ENCODE measurements at regions of chr16 and their contacts with region 1.

Region 1: GRCh38 chr16:75305364-75306098 is 54.1 kb upstream of the BCAR1 start:
- DNase-seq: peak; percentile 97
- H3K4me3 ChIP-seq: no peak overlapping the region
- H3K27ac ChIP-seq: peak overlapping the region; percentile 90
- H3K4me1 ChIP-seq: peaks cover 38% of the 10 kb centered on the region
- H3K27me3 ChIP-seq: no peaks in the 10 kb centered on the region
- CTCF ChIP-seq: no peak
- POLR2A ChIP-seq: peak in 1 of 2 donors; percentile 6

Region 2: DNA sequence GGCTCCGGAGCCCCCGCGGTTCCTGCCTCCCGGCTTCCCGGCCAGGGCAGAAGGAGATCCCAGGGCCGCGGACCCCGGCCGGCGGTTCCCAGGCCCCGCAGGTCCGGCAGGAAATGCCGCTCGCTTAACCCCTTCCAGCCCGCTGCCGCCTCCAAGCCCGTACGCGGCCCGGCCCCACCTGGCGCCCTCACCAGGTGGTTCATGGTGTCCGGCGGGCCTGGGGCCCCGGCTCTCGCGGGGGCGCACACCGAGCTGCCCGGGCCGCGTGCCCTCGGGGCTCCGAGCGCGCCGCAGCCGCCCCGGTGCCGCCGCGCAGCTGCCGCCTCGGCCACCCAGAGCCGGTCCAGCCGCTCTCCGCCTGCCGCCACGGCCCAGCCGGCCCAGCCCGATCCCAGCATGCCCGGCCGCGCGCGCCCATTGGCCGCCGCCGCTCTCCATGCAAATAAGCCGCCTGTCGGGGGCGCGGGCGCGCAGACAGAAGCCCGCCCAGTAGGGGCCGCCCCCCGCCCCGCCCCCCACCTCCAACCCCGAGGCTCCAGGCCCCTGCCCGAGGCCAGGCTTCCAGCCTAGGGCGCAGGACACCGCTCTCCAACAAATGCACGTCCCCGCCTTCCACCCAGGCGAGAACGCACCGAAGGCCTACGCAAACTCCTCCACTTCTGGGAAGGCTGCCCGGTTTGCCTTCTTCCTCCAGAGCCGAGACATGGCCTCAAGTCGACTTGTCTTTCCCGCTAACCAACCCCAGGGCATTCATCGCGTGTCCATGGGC is 54.1 kb before region 1 on chr16 and contains the start of gene BCAR1:
- intact Hi-C with region 1: loop called (anchors 5 kb)
- DNase-seq: no peak
- H3K4me3 ChIP-seq: peak within 1 kb of the TSS; percentile 57 to 85
- H3K27ac ChIP-seq: peak within 1 kb of the TSS; percentile 88
- H3K4me1 ChIP-seq: peaks cover 93% of the 10 kb centered on the region
- H3K27me3 ChIP-seq: no peaks in the 10 kb centered on the region
- CTCF ChIP-seq: no peak
- POLR2A ChIP-seq: peak in 1 of 2 donors; percentile 54
- total RNA-seq, gene BCAR1: 39.5 TPM

Region 3: DNA sequence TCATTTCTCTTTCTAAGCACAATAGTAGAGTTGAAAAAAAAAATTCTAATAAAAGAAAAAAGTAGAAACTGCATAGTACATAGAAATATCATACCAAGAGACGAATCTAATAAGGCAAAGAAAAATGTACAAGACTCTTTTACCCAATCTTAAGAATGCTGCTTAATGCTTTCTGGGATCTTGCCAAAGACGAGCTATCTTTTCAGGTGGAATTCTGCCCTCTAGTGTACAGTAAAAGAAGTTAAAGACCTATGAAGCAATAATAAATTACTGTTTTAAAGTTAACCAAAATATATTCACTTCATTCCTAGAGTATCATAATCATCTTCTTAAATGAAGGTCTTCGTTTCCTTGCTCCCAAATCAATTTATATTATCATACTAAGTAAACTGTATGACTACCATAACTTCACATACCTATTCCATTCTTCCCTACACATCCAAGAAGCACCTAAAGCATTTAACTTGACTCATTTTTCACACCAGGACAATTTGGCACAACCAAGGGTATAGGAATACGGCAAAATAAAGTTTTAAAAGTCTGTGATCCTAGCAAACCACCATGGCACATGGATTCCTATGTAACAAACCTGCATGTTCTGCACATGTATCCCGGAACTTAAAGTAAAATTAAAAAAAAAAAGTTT is 80.1 kb after region 1 on chr16:
- intact Hi-C with region 1: loop called (anchors 10 kb)
- DNase-seq: no peak
- H3K4me3 ChIP-seq: no peak overlapping the region
- H3K27ac ChIP-seq: no peak overlapping the region
- H3K4me1 ChIP-seq: peaks cover 39% of the 10 kb centered on the region
- H3K27me3 ChIP-seq: no peaks in the 10 kb centered on the region
- CTCF ChIP-seq: peak; percentile 70 to 85 (median 83)
- POLR2A ChIP-seq: no peak